Breast epithelium (tissue), 4 donors: ENCODE measurements at regions of chr12 and their contacts with region 1.

Region 1: GRCh38 chr12:112682586-112682985 is 109.0 kb upstream of the RPH3A start:
- DNase-seq: no peak
- H3K4me3 ChIP-seq: no peak overlapping the region
- H3K27ac ChIP-seq: no peak overlapping the region
- H3K4me1 ChIP-seq: no peaks in the 10 kb centered on the region
- H3K27me3 ChIP-seq: peaks cover 0 to 3% of the 10 kb centered on the region in 2 donors
- CTCF ChIP-seq: no peak
- POLR2A ChIP-seq: no peak

Region 2: DNA sequence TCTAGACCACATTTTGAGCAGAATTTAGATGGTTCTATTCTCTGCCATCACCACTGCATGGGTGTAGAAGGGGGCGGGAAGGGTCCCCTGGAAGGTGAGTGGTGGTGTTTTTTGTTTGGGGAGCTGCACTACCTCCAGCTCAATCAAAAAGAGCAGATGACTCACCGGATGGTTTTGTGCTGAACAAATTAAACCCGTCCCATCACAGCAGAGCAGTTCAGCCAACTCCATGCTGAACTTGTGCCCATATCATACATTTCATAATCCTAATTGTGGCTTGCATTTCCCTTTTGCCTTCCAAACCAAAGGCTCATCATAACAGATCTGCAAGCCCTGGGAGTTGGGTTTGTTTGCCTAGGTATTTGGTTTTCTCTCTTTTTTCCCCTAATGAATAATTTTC is 55.9 kb after region 1 on chr12:
- intact Hi-C with region 1: loop called (anchors 2 kb)
- DNase-seq: no peak
- H3K4me3 ChIP-seq: no peak overlapping the region
- H3K27ac ChIP-seq: no peak overlapping the region
- H3K4me1 ChIP-seq: no peaks in the 10 kb centered on the region
- H3K27me3 ChIP-seq: peaks cover 0 to 15% of the 10 kb centered on the region in 2 donors
- CTCF ChIP-seq: no peak
- POLR2A ChIP-seq: no peak

Region 3: DNA sequence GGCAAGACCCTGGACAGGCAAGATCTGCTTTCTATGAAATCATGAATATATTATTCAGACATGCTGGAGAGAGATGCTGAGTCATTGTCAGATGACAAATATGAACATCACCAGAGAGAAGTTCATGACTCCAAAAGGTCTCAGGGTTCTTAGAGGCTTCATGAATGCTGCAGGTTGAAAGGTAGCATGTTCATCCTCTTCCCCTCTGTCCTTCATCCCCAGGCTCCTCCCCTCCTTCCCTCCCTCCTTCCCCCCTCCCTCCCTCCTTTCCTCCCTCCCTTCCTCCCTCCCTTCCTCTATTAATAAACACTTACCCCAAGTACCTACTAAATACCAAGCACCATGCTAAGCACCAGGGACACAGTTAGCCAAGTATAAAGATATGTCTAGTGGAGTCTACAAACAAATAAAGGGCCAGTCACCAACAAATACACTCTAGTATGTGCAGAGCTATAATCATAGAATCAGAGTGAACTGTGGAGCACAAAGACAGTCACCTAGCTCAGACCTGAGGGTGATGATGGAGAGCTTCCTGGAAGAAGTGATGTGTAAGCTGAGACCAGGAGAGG is 155.1 kb after region 1 on chr12:
- intact Hi-C with region 1: no loop called
- DNase-seq: no peak
- H3K4me3 ChIP-seq: no peak overlapping the region
- H3K27ac ChIP-seq: no peak overlapping the region
- H3K4me1 ChIP-seq: no peaks in the 10 kb centered on the region
- H3K27me3 ChIP-seq: no peaks in the 10 kb centered on the region
- CTCF ChIP-seq: no peak
- POLR2A ChIP-seq: no peak